ENCODE measurements at regions of chr6 and their contacts with region 1.

Region 1: GRCh38 chr6:142671791-142672190 is 273.2 kb downstream of the HIVEP2 start:
- DNase-seq: no peak

Region 2: GRCh38 chr6:142242269-142242668 is 429.5 kb before region 1 on chr6:
- intact Hi-C with region 1: no loop called
- DNase-seq: no peak

Region 3: GRCh38 chr6:142566628-142567396 is 105.0 kb before region 1 on chr6:
- intact Hi-C with region 1: loop called (anchors 10 kb)
- DNase-seq: peak in 3 of 10 donors; percentile 19 to 24 (median 23)